ENCODE measurements at regions of chr9 and their contacts with region 1.

Region 1: GRCh38 chr9:7489036-7489435 is 310.5 kb downstream of the DMAC1 start:
- DNase-seq: no peak
- ATAC-seq: no peak
- H3K4me3 ChIP-seq: no peak overlapping the region
- H3K4me3 Mint-ChIP-seq: no peak overlapping the region
- H3K27ac ChIP-seq: no peak overlapping the region
- H3K27ac Mint-ChIP-seq: no peak overlapping the region
- H3K4me1 ChIP-seq: no peaks in the 10 kb centered on the region
- H3K4me1 Mint-ChIP-seq: no peaks in the 10 kb centered on the region
- H3K27me3 ChIP-seq: peaks cover 0 to 3% of the 10 kb centered on the region in 2 experiments
- H3K27me3 Mint-ChIP-seq: peaks cover 1 to 3% of the 10 kb centered on the region in 2 donors

Region 2: DNA sequence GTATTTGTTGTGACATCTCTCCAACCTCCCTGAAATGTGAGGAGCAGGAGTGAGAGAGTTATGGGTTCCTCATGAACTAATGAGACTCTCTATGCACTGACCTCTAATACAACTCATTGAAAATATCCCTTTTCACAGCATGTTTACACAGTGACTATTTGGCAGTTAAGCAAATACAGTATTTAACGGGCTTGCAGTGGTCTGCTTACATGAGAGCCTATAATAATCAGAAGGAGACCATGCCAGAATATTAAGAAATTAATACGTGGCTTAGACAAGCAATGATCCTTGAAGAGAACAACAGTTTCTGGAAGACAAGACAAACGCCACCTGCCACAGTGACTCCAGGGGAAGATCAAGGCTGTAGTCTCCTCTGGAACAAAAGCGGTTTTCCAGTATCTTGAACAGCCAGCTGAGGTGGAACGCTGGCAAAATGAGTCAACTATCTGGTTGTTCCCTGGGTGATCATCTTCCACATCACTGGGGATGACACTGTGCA is 114.0 kb before region 1 on chr9:
- CTCF ChIA-PET with region 1: interaction called in 1 of 2 experiments, 11 read pairs
- POLR2A ChIA-PET with region 1: no interaction called
- DNase-seq: no peak
- ATAC-seq: no peak
- H3K4me3 ChIP-seq: no peak overlapping the region
- H3K4me3 Mint-ChIP-seq: no peak overlapping the region
- H3K27ac ChIP-seq: no peak overlapping the region
- H3K27ac Mint-ChIP-seq: no peak overlapping the region
- H3K4me1 ChIP-seq: no peaks in the 10 kb centered on the region
- H3K4me1 Mint-ChIP-seq: no peaks in the 10 kb centered on the region
- H3K27me3 ChIP-seq: no peaks in the 10 kb centered on the region
- H3K27me3 Mint-ChIP-seq: peaks cover 0 to 3% of the 10 kb centered on the region in 2 donors

Region 3: DNA sequence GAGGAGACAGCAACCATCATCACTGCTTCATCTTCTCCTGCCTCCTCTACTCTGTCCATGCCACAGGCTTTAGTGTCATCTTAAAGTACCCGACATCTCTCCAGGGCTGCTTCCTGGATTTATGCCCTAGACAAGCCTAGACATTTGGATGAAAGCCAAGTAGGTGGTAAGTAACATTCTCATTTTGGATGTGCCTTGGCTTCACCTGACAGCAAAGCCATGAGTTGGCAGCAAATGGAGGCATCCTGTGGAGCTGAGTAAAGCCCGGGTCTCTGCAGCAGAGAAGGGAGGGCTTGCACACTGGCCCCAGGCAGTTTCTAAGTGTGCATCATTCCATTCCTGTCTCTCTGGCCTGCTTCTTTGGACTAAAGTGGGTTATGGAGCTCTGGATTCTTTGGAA is 11.5 kb after region 1 on chr9:
- CTCF ChIA-PET with region 1: no interaction called
- POLR2A ChIA-PET with region 1: no interaction called
- DNase-seq: no peak
- ATAC-seq: no peak
- H3K4me3 ChIP-seq: no peak overlapping the region
- H3K4me3 Mint-ChIP-seq: no peak overlapping the region
- H3K27ac ChIP-seq: no peak overlapping the region
- H3K27ac Mint-ChIP-seq: no peak overlapping the region
- H3K4me1 ChIP-seq: no peaks in the 10 kb centered on the region
- H3K4me1 Mint-ChIP-seq: no peaks in the 10 kb centered on the region
- H3K27me3 ChIP-seq: no peaks in the 10 kb centered on the region
- H3K27me3 Mint-ChIP-seq: peaks cover 10 to 16% of the 10 kb centered on the region in 2 donors